ENCODE measurements at regions of chr12 and their contacts with region 1.

Region 1: DNA sequence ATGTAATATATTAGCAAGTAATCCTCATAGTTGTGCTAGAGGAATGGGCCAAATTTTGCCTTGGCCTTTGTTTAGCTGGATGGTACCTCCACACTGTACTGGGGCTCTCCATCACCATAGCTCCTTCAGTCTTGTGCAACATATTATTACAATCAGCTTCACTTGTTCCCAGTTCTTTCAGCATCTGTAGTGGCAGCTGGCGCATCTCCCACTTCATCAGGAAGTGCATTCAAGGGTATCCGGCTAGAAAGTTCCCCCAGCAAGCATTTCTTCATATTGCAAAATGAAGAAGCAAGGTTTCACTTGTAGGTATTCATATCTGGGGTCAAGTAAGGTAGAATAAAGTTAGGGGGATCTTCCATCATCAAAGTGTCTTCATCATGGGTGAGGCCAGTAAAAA is 123.7 kb downstream of the IGF1 start:
- DNase-seq: no peak
- ATAC-seq: no peak
- H3K4me3 ChIP-seq: no peak overlapping the region
- H3K27ac ChIP-seq: no peak overlapping the region
- H3K4me1 ChIP-seq: no peaks in the 10 kb centered on the region
- H3K27me3 ChIP-seq: no peaks in the 10 kb centered on the region
- CTCF ChIP-seq: no peak
- POLR2A ChIP-seq: no peak
- RAD21 ChIP-seq: no peak

Region 2: GRCh38 chr12:101459642-101460346 is 896.9 kb before region 1 on chr12:
- CTCF ChIA-PET with region 1: no interaction called
- POLR2A ChIA-PET with region 1: no interaction called
- dilution Hi-C with region 1: no loop called
- in situ Hi-C with region 1: no loop called
- intact Hi-C with region 1: loop called (anchors 10 kb)
- DNase-seq: peak; percentile 39
- ATAC-seq: peak; percentile 81
- H3K4me3 ChIP-seq: no peak overlapping the region
- H3K27ac ChIP-seq: no peak overlapping the region
- H3K4me1 ChIP-seq: no peaks in the 10 kb centered on the region
- H3K27me3 ChIP-seq: no peaks in the 10 kb centered on the region
- CTCF ChIP-seq: no peak
- POLR2A ChIP-seq: no peak
- RAD21 ChIP-seq: no peak

Region 3: GRCh38 chr12:102372087-102372486 is 15.4 kb after region 1 on chr12:
- CTCF ChIA-PET with region 1: no interaction called
- POLR2A ChIA-PET with region 1: no interaction called
- dilution Hi-C with region 1: no loop called
- in situ Hi-C with region 1: no loop called
- intact Hi-C with region 1: no loop called
- DNase-seq: peak; percentile 47
- ATAC-seq: peak; percentile 74
- H3K4me3 ChIP-seq: no peak overlapping the region
- H3K27ac ChIP-seq: peak overlapping the region; percentile 14; the same call in 1 of the 2 replicates
- H3K4me1 ChIP-seq: peaks cover 6% of the 10 kb centered on the region
- H3K27me3 ChIP-seq: no peaks in the 10 kb centered on the region
- CTCF ChIP-seq: no peak
- POLR2A ChIP-seq: no peak
- RAD21 ChIP-seq: no peak

Measured in IMR-90 (cell line).